Calu3 (cell line): ENCODE measurements at regions of chr3 and their contacts with region 1.

Region 1: GRCh38 chr3:27533718-27534573 is 49.8 kb upstream of the SLC4A7 start:
- DNase-seq: peak; percentile 81
- H3K4me3 Mint-ChIP-seq: peak overlapping the region; percentile 39
- H3K27ac Mint-ChIP-seq: peak overlapping the region; percentile 72
- H3K4me1 Mint-ChIP-seq: peaks cover 50% of the 10 kb centered on the region
- H3K27me3 Mint-ChIP-seq: no peaks in the 10 kb centered on the region
- CTCF ChIP-seq: no peak

Region 2: DNA sequence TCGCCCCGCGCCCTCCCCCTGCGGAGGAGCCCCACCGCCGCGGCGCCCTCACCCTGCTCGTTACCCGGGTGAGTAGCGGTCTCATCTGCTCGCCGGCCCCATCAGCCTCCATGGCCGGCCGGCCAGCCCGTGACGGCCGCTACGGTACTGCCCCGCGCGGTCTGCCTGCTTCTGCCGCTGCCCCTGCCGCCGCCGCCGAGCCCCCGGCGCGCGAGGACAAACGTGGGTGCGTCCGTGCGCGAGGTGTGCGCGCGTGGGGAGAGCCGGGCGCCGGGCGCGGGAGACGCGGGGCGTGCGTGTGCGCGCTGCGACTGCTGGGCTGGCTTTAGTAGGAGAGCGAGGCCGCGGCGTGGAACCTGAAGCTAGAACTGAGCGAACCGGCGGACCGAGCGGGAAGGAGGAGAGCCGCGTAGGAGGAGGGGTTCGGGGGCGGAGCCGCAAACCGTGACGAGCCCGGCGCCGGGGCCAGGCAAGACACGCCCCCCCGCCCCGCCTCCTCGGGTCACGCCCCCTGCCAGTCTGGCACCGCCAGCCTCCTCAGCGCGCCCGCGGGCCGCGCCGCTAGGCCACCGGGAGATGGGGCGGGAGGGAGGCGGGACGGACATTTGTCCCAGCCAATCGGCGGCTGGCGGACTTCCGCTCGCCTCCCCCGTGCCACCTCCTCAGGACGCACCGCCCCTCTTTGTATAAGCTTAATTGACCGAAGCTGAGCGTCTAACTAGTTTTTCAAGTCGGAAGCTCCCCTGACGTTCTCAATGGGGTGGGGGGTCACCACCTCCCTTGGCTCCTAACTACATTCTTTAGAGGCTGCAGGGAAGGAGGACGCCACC is 49.7 kb before region 1 on chr3 and contains the start of gene SLC4A7:
- CTCF ChIA-PET with region 1: interaction called, 3 read pairs
- intact Hi-C with region 1: loop called (anchors 5 kb)
- DNase-seq: peak; percentile 99
- H3K4me3 Mint-ChIP-seq: peak within 1 kb of the TSS; percentile 97
- H3K27ac Mint-ChIP-seq: peak within 1 kb of the TSS; percentile 88
- H3K4me1 Mint-ChIP-seq: peaks cover 12% of the 10 kb centered on the region
- H3K27me3 Mint-ChIP-seq: no peaks in the 10 kb centered on the region
- CTCF ChIP-seq: no peak
- total RNA-seq, gene SLC4A7: 39.0 and 61.6 TPM in 2 replicates

Region 3: DNA sequence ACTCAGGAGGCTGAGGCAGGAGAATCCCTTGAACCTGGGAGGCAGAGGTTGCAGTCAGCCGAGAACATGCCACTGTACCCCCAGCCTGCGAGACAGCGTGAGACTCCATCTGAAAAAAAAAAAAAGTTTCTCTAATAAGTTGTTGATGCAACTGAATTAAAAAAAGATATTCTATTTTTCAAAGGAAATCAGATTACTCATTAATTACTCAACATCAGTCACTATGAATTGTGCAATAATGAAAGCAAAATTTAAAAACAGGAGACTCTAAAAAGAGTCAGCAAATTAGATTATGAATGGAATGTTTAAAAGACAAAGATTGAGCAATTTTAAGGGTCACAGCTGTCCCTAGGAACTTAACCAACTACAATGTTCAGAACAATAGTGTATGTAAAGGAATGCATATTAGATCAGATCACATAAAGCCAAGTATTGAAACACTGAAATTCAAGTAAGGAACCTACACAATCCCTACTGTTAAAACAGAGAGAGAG is 10.5 kb after region 1 on chr3:
- CTCF ChIA-PET with region 1: interaction called, 12 read pairs
- intact Hi-C with region 1: no loop called
- DNase-seq: no peak
- H3K4me3 Mint-ChIP-seq: no peak overlapping the region
- H3K27ac Mint-ChIP-seq: peak overlapping the region; percentile 34
- H3K4me1 Mint-ChIP-seq: peaks cover 17% of the 10 kb centered on the region
- H3K27me3 Mint-ChIP-seq: no peaks in the 10 kb centered on the region
- CTCF ChIP-seq: no peak

Region 4: GRCh38 chr3:27607370-27607769 is 73.4 kb after region 1 on chr3:
- CTCF ChIA-PET with region 1: no interaction called
- intact Hi-C with region 1: loop called (anchors 10 kb)
- DNase-seq: peak; percentile 58
- H3K4me3 Mint-ChIP-seq: no peak overlapping the region
- H3K27ac Mint-ChIP-seq: peak overlapping the region; percentile 78
- H3K4me1 Mint-ChIP-seq: peaks cover 24% of the 10 kb centered on the region
- H3K27me3 Mint-ChIP-seq: no peaks in the 10 kb centered on the region
- CTCF ChIP-seq: no peak